ENCODE measurements at regions of chr6 and their contacts with region 1.

Region 1: DNA sequence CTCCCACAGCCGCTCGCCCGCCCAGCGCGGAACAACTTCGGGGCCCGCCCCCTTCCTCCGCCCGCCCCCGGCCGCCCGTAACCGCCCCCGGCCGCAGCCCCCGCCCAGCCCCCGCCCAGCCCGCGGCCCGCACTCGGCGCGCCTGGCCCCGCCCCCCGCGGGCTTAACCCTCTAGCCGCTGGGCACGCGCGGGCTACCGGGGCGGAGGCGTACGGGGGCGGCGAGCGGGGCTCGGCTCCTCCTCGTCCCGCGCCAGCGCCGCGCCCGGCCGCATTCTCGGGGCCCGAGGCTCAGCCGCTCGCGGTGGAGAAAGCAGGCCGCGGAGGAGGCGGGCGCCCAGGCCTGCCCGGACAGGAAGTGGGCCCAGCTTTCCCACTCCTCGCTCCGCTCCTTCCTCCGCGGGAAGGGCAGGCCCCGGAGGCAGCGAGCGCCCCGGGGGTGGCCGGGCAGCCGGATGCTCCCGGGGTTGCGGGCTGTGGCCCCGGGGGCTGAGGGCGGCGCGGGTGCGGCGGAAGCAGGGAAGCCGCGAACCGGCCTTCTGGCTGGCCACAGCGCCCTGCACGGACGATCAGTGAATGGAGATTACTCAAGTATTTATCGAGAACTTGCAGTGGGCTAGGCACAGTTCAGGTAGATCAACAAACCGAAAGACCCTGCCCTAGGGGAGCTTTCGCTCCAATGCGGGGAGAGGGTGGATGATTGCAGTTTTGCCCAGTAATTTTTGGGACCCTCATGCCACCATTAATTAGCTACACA is at the start of gene TRAM2:
- DNase-seq: peak; percentile 84
- CTCF ChIP-seq: no peak

Region 2: GRCh38 chr6:52566853-52567279 is 10.3 kb before region 1 on chr6:
- CTCF ChIA-PET with region 1: interaction called, 23 read pairs
- POLR2A ChIA-PET with region 1: no interaction called
- DNase-seq: no peak
- CTCF ChIP-seq: no peak